ENCODE measurements at regions of chr2 and their contacts with region 1.

Region 1: GRCh38 chr2:58131191-58132011 is 84.8 kb downstream of the VRK2 start:
- DNase-seq: no peak
- H3K4me3 ChIP-seq: no peak overlapping the region
- H3K27ac ChIP-seq: no peak overlapping the region
- H3K4me1 ChIP-seq: peaks cover 7% of the 10 kb centered on the region
- H3K27me3 ChIP-seq: no peaks in the 10 kb centered on the region
- CTCF ChIP-seq: no peak

Region 2: GRCh38 chr2:58448065-58448507 is 316.7 kb after region 1 on chr2:
- CTCF ChIA-PET with region 1: no interaction called
- dilution Hi-C with region 1: no loop called
- in situ Hi-C with region 1: no loop called
- intact Hi-C with region 1: loop called (anchors 5 kb)
- DNase-seq: peak; percentile 35
- H3K4me3 ChIP-seq: no peak overlapping the region
- H3K27ac ChIP-seq: no peak overlapping the region
- H3K4me1 ChIP-seq: peaks cover 7% of the 10 kb centered on the region
- H3K27me3 ChIP-seq: no peaks in the 10 kb centered on the region
- CTCF ChIP-seq: peak; percentile 53 to 67